CD4-positive, alpha-beta memory T cell (primary cell): ENCODE measurements at regions of chr9 and their contacts with region 1.

Region 1: DNA sequence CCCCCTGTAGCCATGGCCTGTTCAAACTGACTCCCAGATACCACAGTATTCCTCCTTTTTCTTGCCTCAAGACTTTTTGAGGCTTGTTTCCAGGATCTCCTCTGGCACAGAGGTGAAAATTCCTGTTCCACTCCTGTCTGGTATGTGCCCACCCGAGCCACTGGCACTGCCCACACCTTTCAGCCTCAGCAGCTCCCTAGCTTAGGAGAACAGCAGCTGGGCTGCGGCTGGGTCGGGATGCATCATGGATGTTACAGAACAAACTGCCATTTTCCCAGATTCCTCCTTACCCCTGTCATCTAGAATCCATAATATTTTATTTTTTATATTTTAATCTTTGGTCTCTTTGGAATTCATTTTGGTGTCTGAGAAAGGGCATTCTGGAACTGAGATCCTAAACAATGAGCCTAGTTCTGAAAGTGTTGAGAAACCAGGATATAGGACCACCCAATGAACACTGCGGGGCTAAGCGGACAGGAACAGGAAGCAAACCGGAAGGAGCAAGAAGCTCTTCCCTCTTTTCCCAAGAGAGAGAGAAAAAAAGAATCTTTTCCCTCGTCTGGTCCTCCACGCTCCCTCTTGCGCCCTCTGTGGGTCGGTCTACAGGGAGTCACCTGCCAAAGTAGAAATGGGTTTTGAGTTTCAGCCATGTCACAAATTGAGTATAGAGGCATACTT is 12.5 kb downstream of the OR2S2 start:
- DNase-seq: peak; percentile 43 to 58 (median 55)
- H3K4me3 ChIP-seq: no peak overlapping the region
- H3K4me3 Mint-ChIP-seq: peak overlapping the region in 7 of 8 donors; percentile 26 to 74 (median 61)
- H3K27ac ChIP-seq: no peak overlapping the region
- H3K27ac Mint-ChIP-seq: peak overlapping the region; percentile 3 to 82 (median 58)
- H3K4me1 ChIP-seq: peaks cover 70% of the 10 kb centered on the region
- H3K4me1 Mint-ChIP-seq: peaks cover 43 to 72% (median 65%) of the 10 kb centered on the region in 4 donors
- H3K27me3 ChIP-seq: no peaks in the 10 kb centered on the region
- H3K27me3 Mint-ChIP-seq: no peaks in the 10 kb centered on the region

Region 2: DNA sequence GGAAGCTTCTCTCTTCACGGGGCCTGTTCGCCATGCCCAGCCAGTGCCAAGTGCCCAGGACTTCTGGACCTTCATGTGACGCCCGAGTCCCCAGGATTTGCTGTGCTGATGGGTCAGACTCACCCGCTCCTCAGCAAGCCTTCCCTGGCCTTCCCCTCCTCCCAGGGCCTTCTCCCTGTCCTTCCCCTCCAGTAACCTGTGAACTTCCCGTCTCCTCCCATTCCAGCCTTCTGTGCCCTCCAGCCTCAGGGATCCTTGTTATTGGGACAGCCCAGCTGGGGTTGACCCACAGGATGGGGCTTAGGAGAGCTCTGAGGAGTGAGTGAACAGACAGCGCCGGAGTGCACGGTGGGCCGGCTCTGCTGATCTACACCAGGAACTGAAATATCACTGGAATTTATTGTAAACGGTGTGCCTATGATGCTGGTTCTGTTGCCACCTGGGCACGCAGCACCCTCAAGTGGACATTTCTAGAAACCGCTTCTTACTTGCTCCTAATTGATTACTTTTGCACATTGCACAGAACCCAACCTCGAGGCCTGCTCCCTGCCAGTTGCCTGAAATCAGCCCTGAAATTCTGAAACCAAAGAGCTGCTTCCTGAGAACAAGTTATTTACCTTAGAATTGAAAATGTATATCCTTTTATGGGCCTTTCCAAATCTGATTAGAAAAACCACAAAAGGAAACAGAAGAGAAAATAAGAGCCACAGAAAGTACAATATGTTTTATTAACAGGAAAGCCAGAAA is 34.7 kb before region 1 on chr9:
- CTCF ChIA-PET with region 1: interaction called, 379 read pairs
- POLR2A ChIA-PET with region 1: interaction called, 11 read pairs
- intact Hi-C with region 1: loop called (anchors 2 kb)
- DNase-seq: peak; percentile 56 to 77 (median 69)
- H3K4me3 ChIP-seq: peak overlapping the region in 1 of 2 donors; percentile 20
- H3K4me3 Mint-ChIP-seq: peak overlapping the region; percentile 7 to 88 (median 76)
- H3K27ac ChIP-seq: peak overlapping the region; percentile 30
- H3K27ac Mint-ChIP-seq: peak overlapping the region; percentile 78 to 97 (median 96)
- H3K4me1 ChIP-seq: peaks cover 68% of the 10 kb centered on the region
- H3K4me1 Mint-ChIP-seq: peaks cover 41 to 64% (median 55%) of the 10 kb centered on the region in 4 donors
- H3K27me3 ChIP-seq: no peaks in the 10 kb centered on the region
- H3K27me3 Mint-ChIP-seq: no peaks in the 10 kb centered on the region